H1 (cell line): ENCODE measurements at regions of chr3 and their contacts with region 1.

Region 1: DNA sequence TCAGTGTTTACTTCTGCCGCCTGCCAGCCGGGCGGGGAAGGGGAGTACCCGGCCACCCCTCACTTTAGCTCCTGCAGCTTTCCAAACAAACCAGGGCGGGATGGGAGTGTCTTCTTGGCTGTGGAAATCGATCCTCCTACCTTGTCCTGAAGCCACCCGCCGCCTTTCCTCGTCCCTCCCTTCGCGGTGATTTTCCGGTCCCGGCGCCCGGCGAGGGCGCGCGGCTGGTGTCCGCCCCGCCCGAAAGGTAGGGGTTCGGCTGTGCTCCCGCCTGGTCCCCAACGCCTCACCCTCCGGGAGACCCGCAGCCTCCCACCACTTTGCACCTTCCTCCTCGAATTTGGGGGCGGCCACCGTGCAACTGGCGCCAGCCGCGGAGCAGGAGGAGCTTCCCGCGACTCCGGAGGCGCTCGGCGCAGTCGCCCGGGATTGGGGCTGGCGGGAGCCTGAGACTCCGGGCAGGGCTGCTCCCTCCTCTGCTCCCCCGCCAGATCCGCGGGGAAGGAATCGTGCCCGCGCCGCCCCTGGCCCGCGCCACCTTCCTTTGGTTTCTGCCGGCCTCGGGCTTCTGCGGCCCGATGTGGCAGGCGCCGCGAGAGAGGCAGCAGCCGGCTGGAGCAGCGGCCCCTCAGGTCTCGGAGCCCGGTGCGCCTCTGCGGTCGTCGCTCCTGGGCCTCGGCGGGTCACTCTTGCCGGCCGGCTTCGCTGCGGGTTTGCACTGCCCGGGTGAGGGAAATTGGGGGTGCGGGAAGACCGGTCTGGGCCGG is 30.7 kb upstream of the ST3GAL6 start:
- DNase-seq: peak; percentile 31 to 84
- H3K4me3 ChIP-seq: peak overlapping the region; percentile 68 to 85 (median 73)
- H3K27ac ChIP-seq: peak overlapping the region; percentile 37; the same call in 1 of the 2 replicates
- H3K4me1 ChIP-seq: peaks cover 0 to 8% (median 0%) of the 10 kb centered on the region in 4 experiments; a peak in 2 of 7 replicates
- H3K27me3 ChIP-seq: peaks cover 0 to 8% (median 3%) of the 10 kb centered on the region in 4 experiments; a peak in 4 of 7 replicates
- CTCF ChIP-seq: no peak
- EP300 ChIP-seq: no peak
- POLR2A ChIP-seq: peak in 1 of 2 experiments; percentile 35; a peak in 1 of 3 replicates
- RAD21 ChIP-seq: 0 out of 4 replicates have a peak, but pooled peaks of 1 of the 2 experiments have one; percentile 1

Region 2: GRCh38 chr3:98722389-98722788 is 10.1 kb before region 1 on chr3:
- CTCF ChIA-PET with region 1: interaction called, 3 read pairs
- POLR2A ChIA-PET with region 1: interaction called, 10 read pairs
- DNase-seq: peak in 1 of 2 experiments; percentile 25
- H3K4me3 ChIP-seq: peak overlapping the region in 1 of 4 experiments; percentile 29; a peak in 1 of 8 replicates
- H3K27ac ChIP-seq: no peak overlapping the region
- H3K4me1 ChIP-seq: peaks cover 0 to 13% (median 2%) of the 10 kb centered on the region in 4 experiments; a peak in 2 of 7 replicates
- H3K27me3 ChIP-seq: no peaks in the 10 kb centered on the region; a peak in 1 of 7 replicates
- CTCF ChIP-seq: no peak
- EP300 ChIP-seq: no peak
- POLR2A ChIP-seq: no peak
- RAD21 ChIP-seq: no peak